Dendritic cell treated with granulocyte-macrophage colony-stimulating factor and Interleukin-4, amounts not matched to agents 40 ng/mL and 50 ng/mL, for 4 days (primary cell): ENCODE measurements at regions of chr3 and their contacts with region 1.

Region 1: DNA sequence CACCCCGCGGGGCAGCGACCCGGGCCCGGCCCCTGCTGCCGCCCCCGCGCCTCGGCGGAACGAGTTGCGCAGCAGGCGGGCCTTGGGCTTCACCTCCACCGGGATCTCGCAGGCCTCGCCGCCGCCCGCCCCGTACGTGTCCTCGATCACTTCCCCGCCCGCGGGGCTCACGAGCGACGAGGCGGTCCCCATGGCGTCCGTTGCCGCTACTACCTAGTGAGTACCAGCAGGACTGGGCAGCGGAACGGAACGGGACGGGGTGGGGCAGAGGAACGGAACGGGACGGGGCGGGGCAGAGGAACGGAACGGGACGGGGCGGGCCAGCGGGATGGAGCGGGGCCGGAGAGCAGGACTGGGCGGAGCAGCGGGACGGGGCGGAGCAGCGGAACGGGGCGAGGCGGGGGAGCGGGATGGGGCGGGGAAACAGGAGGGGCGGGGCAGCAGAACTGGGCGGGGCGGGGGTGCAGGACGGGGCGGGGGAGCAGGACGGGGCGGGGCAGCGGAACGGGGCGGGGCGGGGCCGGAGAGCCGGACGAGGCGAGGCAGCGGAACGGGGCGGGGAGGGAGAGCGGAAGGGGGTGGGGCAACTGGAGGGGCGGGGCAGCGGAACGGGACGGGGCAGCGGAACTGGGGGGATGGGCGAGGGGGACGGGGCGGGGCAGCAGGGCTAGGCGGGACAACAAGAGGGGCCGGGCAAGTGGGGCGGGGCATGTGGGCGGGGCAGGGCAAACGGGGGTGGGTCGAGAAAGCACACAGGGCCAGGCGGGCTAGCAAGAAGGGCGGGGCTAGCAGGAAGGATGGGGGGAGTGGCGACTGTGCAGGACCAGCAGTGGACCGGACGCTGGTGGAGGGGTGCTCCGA is at the start of gene NPHP3:
- H3K4me3 Mint-ChIP-seq: peak within 1 kb of the TSS; percentile 89
- H3K27ac Mint-ChIP-seq: peak within 1 kb of the TSS; percentile 86
- H3K4me1 Mint-ChIP-seq: peaks cover 33% of the 10 kb centered on the region
- H3K27me3 Mint-ChIP-seq: no peaks in the 10 kb centered on the region

Region 2: GRCh38 chr3:130746246-130747039 is 1976.0 kb before region 1 on chr3 and contains the start of gene PIK3R4:
- intact Hi-C with region 1: loop called (anchors 5 kb)
- H3K4me3 Mint-ChIP-seq: peak within 1 kb of the TSS; percentile 84
- H3K27ac Mint-ChIP-seq: peak within 1 kb of the TSS; percentile 97
- H3K4me1 Mint-ChIP-seq: peaks cover 41% of the 10 kb centered on the region
- H3K27me3 Mint-ChIP-seq: no peaks in the 10 kb centered on the region

Region 3: GRCh38 chr3:132416807-132417694 is 305.3 kb before region 1 on chr3 and contains the start of gene DNAJC13:
- intact Hi-C with region 1: loop called (anchors 5 kb)
- H3K4me3 Mint-ChIP-seq: peak within 1 kb of the TSS; percentile 98
- H3K27ac Mint-ChIP-seq: peak within 1 kb of the TSS; percentile 92
- H3K4me1 Mint-ChIP-seq: peaks cover 14% of the 10 kb centered on the region
- H3K27me3 Mint-ChIP-seq: no peaks in the 10 kb centered on the region

Region 4: DNA sequence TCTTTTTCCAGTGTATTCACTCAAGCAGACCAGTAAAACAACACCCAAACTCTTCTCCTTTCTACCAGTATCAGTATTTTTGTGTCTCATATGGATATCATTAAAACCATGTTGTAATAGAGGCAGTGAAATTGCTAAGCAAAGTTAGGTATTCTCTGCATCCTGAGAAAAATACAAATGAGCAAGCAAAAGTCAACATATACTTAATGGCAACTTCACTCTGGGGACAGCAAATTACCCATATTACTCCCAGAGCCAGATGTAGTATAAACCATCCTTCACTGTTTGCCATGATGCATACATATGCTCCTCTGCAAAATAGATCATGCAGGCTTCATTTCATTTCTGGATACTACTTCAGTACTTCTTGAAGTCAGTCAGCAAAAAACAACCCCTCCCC is 40.2 kb before region 1 on chr3:
- intact Hi-C with region 1: no loop called
- H3K4me3 Mint-ChIP-seq: no peak overlapping the region
- H3K27ac Mint-ChIP-seq: no peak overlapping the region
- H3K4me1 Mint-ChIP-seq: no peaks in the 10 kb centered on the region
- H3K27me3 Mint-ChIP-seq: no peaks in the 10 kb centered on the region

Region 5: GRCh38 chr3:132695422-132695821 is 27.0 kb before region 1 on chr3:
- intact Hi-C with region 1: no loop called
- H3K4me3 Mint-ChIP-seq: no peak overlapping the region
- H3K27ac Mint-ChIP-seq: no peak overlapping the region
- H3K4me1 Mint-ChIP-seq: no peaks in the 10 kb centered on the region
- H3K27me3 Mint-ChIP-seq: no peaks in the 10 kb centered on the region

Region 6: GRCh38 chr3:132709761-132710160 is 12.6 kb before region 1 on chr3:
- intact Hi-C with region 1: no loop called
- H3K4me3 Mint-ChIP-seq: no peak overlapping the region
- H3K27ac Mint-ChIP-seq: no peak overlapping the region
- H3K4me1 Mint-ChIP-seq: no peaks in the 10 kb centered on the region
- H3K27me3 Mint-ChIP-seq: no peaks in the 10 kb centered on the region

Region 7: GRCh38 chr3:133384331-133385027 is 662.1 kb after region 1 on chr3:
- intact Hi-C with region 1: loop called (anchors 5 kb)
- H3K4me3 Mint-ChIP-seq: no peak overlapping the region
- H3K27ac Mint-ChIP-seq: no peak overlapping the region
- H3K4me1 Mint-ChIP-seq: no peaks in the 10 kb centered on the region
- H3K27me3 Mint-ChIP-seq: no peaks in the 10 kb centered on the region

Region 8: GRCh38 chr3:133426721-133427120 is 704.3 kb after region 1 on chr3:
- intact Hi-C with region 1: loop called (anchors 1 kb)
- H3K4me3 Mint-ChIP-seq: no peak overlapping the region
- H3K27ac Mint-ChIP-seq: no peak overlapping the region
- H3K4me1 Mint-ChIP-seq: peaks cover 9% of the 10 kb centered on the region
- H3K27me3 Mint-ChIP-seq: peaks cover 14% of the 10 kb centered on the region

Region 9: GRCh38 chr3:133661454-133662277 is 939.3 kb after region 1 on chr3 and contains the start of gene TOPBP1:
- intact Hi-C with region 1: loop called (anchors 5 kb)
- H3K4me3 Mint-ChIP-seq: peak within 1 kb of the TSS; percentile 88
- H3K27ac Mint-ChIP-seq: peak within 1 kb of the TSS; percentile 91
- H3K4me1 Mint-ChIP-seq: peaks cover 31% of the 10 kb centered on the region
- H3K27me3 Mint-ChIP-seq: no peaks in the 10 kb centered on the region

Region 10: GRCh38 chr3:133927540-133928066 is 1205.2 kb after region 1 on chr3:
- intact Hi-C with region 1: loop called (anchors 5 kb)
- H3K4me3 Mint-ChIP-seq: peak overlapping the region; percentile 74
- H3K27ac Mint-ChIP-seq: peak overlapping the region; percentile 42
- H3K4me1 Mint-ChIP-seq: peaks cover 13% of the 10 kb centered on the region
- H3K27me3 Mint-ChIP-seq: peaks cover 37% of the 10 kb centered on the region